ENCODE measurements at regions of chr4 and their contacts with region 1.

Region 1: GRCh38 chr4:106303548-106304281 is 12.3 kb downstream of the TBCK start:
- DNase-seq: no peak
- ATAC-seq: no peak
- H3K4me3 ChIP-seq: no peak overlapping the region
- H3K4me3 Mint-ChIP-seq: no peak overlapping the region
- H3K27ac ChIP-seq: no peak overlapping the region
- H3K27ac Mint-ChIP-seq: peak overlapping the region; percentile 61
- H3K4me1 ChIP-seq: no peaks in the 10 kb centered on the region
- H3K4me1 Mint-ChIP-seq: peaks cover 32% of the 10 kb centered on the region
- H3K27me3 ChIP-seq: no peaks in the 10 kb centered on the region
- H3K27me3 Mint-ChIP-seq: no peaks in the 10 kb centered on the region
- CTCF ChIP-seq: no peak

Region 2: GRCh38 chr4:106315968-106316772 is 12.5 kb after region 1 on chr4 and contains the starts of genes AIMP1 and TBCK:
- CTCF ChIA-PET with region 1: no interaction called
- POLR2A ChIA-PET with region 1: interaction called, 11 read pairs
- intact Hi-C with region 1: no loop called
- DNase-seq: peak; percentile 81 to 95 (median 90)
- ATAC-seq: peak; percentile 85
- H3K4me3 ChIP-seq: peak within 1 kb of the TSS; percentile 72 to 85
- H3K4me3 Mint-ChIP-seq: no peak within 1 kb of the TSS
- H3K27ac ChIP-seq: peak within 1 kb of the TSS; percentile 89 to 96
- H3K27ac Mint-ChIP-seq: no peak within 1 kb of the TSS
- H3K4me1 ChIP-seq: peaks cover 19% of the 10 kb centered on the region
- H3K4me1 Mint-ChIP-seq: peaks cover 42% of the 10 kb centered on the region
- H3K27me3 ChIP-seq: no peaks in the 10 kb centered on the region
- H3K27me3 Mint-ChIP-seq: no peaks in the 10 kb centered on the region
- CTCF ChIP-seq: no peak
- total RNA-seq, gene AIMP1: 69.3 to 79.2 TPM
- total RNA-seq, gene TBCK: 17.4 to 20.4 TPM

Measured in CD8-positive, alpha-beta T cell (primary cell).